AG04450 (cell line): ENCODE measurements at regions of chr12 and their contacts with region 1.

Region 1: DNA sequence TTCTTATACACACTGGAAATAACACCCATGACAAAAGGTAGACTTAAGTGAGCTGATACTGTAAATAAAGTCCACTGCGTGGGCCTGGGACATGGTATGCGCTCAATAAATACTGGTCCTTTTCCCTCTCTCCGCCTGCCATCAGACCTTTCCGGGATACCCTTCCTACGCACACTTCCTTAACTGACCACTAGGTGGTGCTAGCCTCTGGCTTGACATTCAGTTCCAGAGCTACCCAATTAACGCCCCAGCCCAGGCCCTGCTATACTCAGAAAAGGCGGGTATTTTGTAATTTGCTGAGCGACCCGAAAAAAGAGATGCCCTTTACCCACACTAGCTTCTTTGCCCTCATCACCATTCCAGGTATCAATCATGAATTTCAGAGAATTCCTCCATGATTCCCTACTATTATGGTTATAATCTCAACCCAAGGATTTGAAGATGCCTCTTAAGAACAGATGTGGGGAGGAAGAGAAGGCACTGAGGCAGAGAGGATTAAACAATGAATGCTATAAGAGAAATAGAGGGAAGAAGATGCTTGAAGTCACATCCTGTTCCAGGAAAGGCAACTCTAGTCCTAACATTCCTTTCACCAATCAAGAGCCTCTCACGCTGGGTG is 3.9 kb upstream of the LRP1 start:
- DNase-seq: no peak
- H3K4me3 ChIP-seq: no peak overlapping the region
- H3K27ac ChIP-seq: no peak overlapping the region
- H3K27me3 ChIP-seq: no peaks in the 10 kb centered on the region
- CTCF ChIP-seq: peak; percentile 98

Region 2: GRCh38 chr12:56839915-56840325 is 284.4 kb before region 1 on chr12:
- CTCF ChIA-PET with region 1: no interaction called
- POLR2A ChIA-PET with region 1: no interaction called
- DNase-seq: no peak
- H3K4me3 ChIP-seq: no peak overlapping the region
- H3K27ac ChIP-seq: no peak overlapping the region
- H3K27me3 ChIP-seq: peaks cover 7% of the 10 kb centered on the region
- CTCF ChIP-seq: peak; percentile 42

Region 3: GRCh38 chr12:57111031-57111734 is 13.2 kb before region 1 on chr12 and contains the start of gene STAT6:
- CTCF ChIA-PET with region 1: interaction called, 31 read pairs
- POLR2A ChIA-PET with region 1: interaction called, 17 read pairs
- DNase-seq: no peak
- H3K4me3 ChIP-seq: peak within 1 kb of the TSS; percentile 87
- H3K27ac ChIP-seq: peak within 1 kb of the TSS; percentile 99
- H3K27me3 ChIP-seq: no peaks in the 10 kb centered on the region
- CTCF ChIP-seq: no peak
- polyA plus RNA-seq, gene STAT6: 79.5 and 94.2 TPM in 2 replicates

Region 4: DNA sequence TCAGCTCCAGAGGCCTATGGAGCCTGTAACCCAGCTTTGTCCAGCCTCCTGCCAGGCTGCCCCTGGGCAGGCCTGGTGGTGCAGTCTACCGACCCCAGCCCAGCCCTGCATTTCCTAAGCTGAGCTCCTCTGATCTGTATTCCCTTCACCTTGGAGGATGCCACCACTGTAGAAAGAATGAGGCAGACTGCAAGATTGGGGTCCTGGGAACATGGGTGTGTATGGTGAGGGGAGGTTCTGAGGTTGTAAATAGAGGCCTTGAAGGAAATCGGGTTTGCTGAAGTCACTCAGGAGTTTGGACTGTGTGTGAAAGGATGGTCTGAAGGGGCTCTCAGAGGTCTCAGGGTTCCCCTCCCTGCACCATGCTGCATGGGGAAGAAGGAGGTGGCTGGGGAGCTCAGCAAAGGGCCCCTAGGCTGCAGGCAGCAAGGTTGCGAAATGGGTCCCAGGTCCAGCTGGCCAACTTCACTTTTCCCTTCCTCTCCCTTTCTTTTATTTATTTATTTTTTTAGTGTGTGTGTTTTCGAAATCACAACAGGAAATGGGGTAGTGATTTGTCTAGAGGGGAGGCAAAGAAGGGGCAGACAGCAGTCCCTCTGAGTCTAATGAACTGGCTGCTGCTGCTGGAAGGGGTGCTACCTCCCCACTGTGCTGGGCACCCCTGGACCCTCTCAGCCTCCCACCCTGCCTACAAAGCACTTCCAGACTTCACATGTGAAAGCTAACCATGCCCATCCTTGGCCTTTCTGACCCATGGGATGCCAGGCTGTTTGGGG is 24.3 kb after region 1 on chr12:
- CTCF ChIA-PET with region 1: interaction called, 13 read pairs
- POLR2A ChIA-PET with region 1: interaction called, 8 read pairs
- DNase-seq: no peak
- H3K4me3 ChIP-seq: peak overlapping the region; percentile 29
- H3K27ac ChIP-seq: peak overlapping the region; percentile 93
- H3K27me3 ChIP-seq: no peaks in the 10 kb centered on the region
- CTCF ChIP-seq: no peak

Region 5: GRCh38 chr12:57182921-57183790 is 58.8 kb after region 1 on chr12:
- CTCF ChIA-PET with region 1: interaction called, 49 read pairs
- POLR2A ChIA-PET with region 1: interaction called, 3 read pairs
- DNase-seq: peak; percentile 26
- H3K4me3 ChIP-seq: no peak overlapping the region
- H3K27ac ChIP-seq: no peak overlapping the region
- H3K27me3 ChIP-seq: no peaks in the 10 kb centered on the region
- CTCF ChIP-seq: peak; percentile 87

Region 6: DNA sequence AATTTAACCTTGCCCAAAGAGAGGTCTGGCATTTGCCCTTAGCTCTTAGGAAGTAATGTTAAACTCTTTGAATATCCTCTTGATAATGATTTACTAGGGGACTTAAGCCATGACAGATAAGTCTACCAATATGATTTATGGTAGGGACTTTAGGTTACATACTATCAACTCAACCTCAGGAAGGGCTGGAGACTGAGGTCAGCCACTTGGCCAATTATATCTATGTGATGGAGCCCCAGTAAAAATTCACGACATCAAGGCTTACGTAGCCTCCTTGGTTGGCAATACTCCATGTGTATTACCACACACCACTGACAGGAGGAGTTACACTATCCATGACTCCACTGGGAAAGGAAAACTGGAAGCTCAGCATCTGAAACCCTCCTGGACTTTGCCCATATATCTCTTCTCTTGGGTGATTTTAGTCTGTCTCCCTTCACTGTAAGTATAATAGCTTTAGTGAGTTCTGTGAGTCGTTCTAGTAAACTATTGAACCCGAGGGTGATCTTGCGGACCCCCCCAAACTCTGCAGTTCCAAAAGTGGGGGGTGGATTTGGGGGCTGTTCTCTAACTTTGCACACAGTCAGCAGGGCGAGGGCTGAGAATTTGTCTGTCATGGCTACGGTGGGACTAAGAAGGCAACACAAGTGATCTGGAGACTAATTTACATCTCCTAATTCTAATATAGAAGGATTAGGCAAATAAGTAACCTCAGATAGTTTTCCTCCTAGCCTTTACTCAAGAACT is 244.2 kb after region 1 on chr12:
- CTCF ChIA-PET with region 1: no interaction called
- POLR2A ChIA-PET with region 1: no interaction called
- DNase-seq: no peak
- H3K4me3 ChIP-seq: no peak overlapping the region
- H3K27ac ChIP-seq: no peak overlapping the region
- H3K27me3 ChIP-seq: no peaks in the 10 kb centered on the region
- CTCF ChIP-seq: no peak